CD4-positive, alpha-beta memory T cell (primary cell): ENCODE measurements at regions of chrX and their contacts with region 1.

Region 1: DNA sequence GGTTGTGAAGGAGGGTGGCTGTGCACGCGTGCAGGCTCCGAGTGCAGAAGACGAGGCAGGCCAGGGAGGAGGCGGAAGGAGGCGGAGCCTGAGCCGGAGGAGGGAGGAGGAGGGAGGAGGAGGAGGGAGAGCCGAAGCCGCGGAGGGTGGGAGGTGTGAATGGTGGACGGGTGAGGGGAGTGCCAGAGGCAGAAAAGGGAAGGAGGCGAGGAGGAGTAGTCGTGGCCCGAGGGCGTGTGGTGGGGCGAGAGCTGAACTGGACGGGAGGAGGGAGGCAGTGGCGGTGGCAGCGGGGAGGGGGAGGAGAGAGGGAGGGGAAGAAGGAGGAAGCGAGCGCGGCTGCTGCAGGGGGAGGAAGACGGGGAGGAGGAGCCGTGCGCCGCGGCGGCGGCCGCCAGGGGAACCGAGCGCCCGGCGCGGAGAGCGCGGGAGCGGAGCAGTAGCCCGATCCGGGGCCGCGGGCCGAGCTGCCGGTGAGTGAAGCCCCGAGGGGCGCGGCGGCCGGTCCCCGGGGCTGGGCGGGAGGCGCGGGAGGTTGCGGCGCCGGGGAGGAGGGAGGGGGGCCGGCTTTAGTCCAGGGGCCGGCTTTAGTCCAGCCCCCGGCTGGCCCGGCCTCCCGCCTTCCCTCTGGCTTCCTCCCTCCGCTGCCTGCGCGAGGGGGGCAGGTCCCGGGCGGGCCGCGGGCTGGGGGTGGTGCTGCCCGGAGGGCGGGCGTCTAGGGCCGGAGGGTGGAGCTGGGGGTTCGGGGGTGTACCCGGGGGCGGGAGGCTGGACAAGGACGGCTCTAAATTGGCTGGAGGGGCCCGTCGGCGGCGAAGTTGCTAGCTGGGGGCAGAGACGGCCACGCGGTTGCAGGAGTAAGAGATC is at the start of gene TMEM164:
- DNase-seq: peak; percentile 74 to 85 (median 81)
- H3K4me3 ChIP-seq: peak within 1 kb of the TSS in 1 of 2 donors; percentile 60
- H3K4me3 Mint-ChIP-seq: peak within 1 kb of the TSS; percentile 86 to 99 (median 89)
- H3K27ac ChIP-seq: peak within 1 kb of the TSS; percentile 43
- H3K27ac Mint-ChIP-seq: peak within 1 kb of the TSS; percentile 80 to 94 (median 92)
- H3K4me1 ChIP-seq: peaks cover 35% of the 10 kb centered on the region
- H3K4me1 Mint-ChIP-seq: peaks cover 19 to 48% (median 32%) of the 10 kb centered on the region in 4 donors
- H3K27me3 ChIP-seq: no peaks in the 10 kb centered on the region
- H3K27me3 Mint-ChIP-seq: no peaks in the 10 kb centered on the region
- total RNA-seq, gene TMEM164: 16.8 to 17.2 TPM

Region 2: DNA sequence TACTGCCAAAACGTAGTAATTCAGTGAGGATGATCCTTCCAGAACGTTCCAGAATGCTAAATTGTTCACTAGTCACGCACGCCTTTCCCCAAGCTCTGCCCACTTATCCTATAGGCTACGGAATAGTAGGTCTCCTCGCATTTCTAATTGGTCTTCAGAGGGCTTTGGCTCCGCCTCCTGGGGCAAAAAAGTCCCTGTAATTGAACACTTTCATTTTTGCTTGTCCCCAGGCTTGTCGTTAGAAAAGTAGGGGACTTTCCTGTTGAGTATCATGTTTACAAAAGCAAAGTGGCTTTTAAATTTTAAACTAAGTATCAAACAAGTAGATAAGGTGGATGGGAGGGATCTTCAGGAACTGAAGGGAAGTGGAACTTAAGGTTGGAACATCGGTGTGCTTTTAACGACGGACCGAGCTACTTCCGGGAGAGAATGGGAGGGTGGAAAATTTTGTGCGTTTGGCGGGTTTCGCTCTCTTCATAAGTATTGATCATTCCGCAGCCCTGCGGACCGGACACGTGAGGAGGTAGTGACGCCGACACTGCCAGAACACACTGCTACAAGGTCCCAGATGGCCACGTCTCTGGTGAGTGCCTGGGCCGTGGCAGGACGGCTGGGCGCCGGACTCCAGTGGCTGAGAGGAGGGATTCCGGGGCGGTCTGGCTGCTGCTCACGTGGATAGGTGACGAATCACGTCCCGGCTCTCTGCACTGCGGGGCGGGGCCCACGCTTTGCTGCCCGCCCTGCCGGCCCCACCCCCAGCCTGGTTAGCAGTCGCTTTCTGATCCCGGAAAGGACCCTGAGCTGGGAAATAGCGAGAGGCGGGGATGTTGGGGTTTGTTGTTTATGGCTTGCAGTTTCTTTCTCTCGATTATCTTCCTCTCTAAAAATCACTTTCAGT is 465.8 kb before region 1 on chrX and contains the start of gene NXT2:
- CTCF ChIA-PET with region 1: no interaction called
- POLR2A ChIA-PET with region 1: interaction called, 4 read pairs
- intact Hi-C with region 1: loop called (anchors 5 kb)
- DNase-seq: peak; percentile 86 to 90 (median 88)
- H3K4me3 ChIP-seq: peak within 1 kb of the TSS; percentile 71 to 78
- H3K4me3 Mint-ChIP-seq: peak within 1 kb of the TSS; percentile 87 to 98 (median 95)
- H3K27ac ChIP-seq: peak within 1 kb of the TSS; percentile 78
- H3K27ac Mint-ChIP-seq: peak within 1 kb of the TSS; percentile 92 to 99 (median 98)
- H3K4me1 ChIP-seq: peaks cover 13% of the 10 kb centered on the region
- H3K4me1 Mint-ChIP-seq: peaks cover 3 to 19% (median 12%) of the 10 kb centered on the region in 4 donors
- H3K27me3 ChIP-seq: no peaks in the 10 kb centered on the region
- H3K27me3 Mint-ChIP-seq: peaks cover 4 to 9% of the 10 kb centered on the region in 2 donors
- total RNA-seq, gene NXT2: 6.2 to 6.3 TPM

Region 3: DNA sequence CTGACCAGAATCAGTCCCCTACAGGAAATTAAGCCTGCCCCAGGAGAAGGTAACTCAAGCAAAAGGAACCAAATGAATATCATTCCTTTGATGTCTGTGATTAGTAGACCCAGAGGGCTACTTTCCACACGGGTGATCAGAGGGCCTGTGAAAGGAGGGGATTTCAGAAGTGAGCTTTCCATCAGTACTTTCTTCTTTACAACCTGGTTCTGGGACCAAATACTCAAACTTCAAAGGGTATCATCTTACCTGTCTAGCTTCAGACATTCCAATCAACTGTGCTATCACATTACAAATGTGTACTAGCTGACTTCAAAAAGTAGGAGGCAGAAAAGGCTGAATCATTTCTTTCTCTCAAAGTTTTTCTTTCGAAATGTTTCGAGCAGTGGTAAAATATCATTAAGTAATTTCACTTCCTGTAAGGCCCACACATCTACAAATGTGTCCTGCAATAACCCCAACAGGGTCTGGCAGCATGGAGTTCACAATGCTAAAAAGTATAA is 293.4 kb before region 1 on chrX:
- CTCF ChIA-PET with region 1: no interaction called
- POLR2A ChIA-PET with region 1: no interaction called
- intact Hi-C with region 1: no loop called
- DNase-seq: no peak
- H3K4me3 ChIP-seq: no peak overlapping the region
- H3K4me3 Mint-ChIP-seq: peak overlapping the region in 5 of 8 donors; percentile 8 to 65 (median 47)
- H3K27ac ChIP-seq: no peak overlapping the region
- H3K27ac Mint-ChIP-seq: peak overlapping the region in 3 of 7 donors; percentile 5 to 69 (median 61)
- H3K4me1 ChIP-seq: peaks cover 26% of the 10 kb centered on the region
- H3K4me1 Mint-ChIP-seq: peaks cover 25 to 57% (median 41%) of the 10 kb centered on the region in 4 donors
- H3K27me3 ChIP-seq: no peaks in the 10 kb centered on the region
- H3K27me3 Mint-ChIP-seq: no peaks in the 10 kb centered on the region

Region 4: GRCh38 chrX:109990582-109991276 is 11.8 kb before region 1 on chrX:
- CTCF ChIA-PET with region 1: no interaction called
- POLR2A ChIA-PET with region 1: interaction called, 13 read pairs
- intact Hi-C with region 1: no loop called
- DNase-seq: peak in 2 of 5 donors; percentile 12 to 13
- H3K4me3 ChIP-seq: no peak overlapping the region
- H3K4me3 Mint-ChIP-seq: peak overlapping the region in 5 of 8 donors; percentile 32 to 69 (median 59)
- H3K27ac ChIP-seq: no peak overlapping the region
- H3K27ac Mint-ChIP-seq: peak overlapping the region in 6 of 7 donors; percentile 27 to 88 (median 38)
- H3K4me1 ChIP-seq: peaks cover 26% of the 10 kb centered on the region
- H3K4me1 Mint-ChIP-seq: peaks cover 17 to 33% (median 26%) of the 10 kb centered on the region in 4 donors
- H3K27me3 ChIP-seq: no peaks in the 10 kb centered on the region
- H3K27me3 Mint-ChIP-seq: no peaks in the 10 kb centered on the region